ENCODE measurements at regions of chr20 and their contacts with region 1.

Region 1: DNA sequence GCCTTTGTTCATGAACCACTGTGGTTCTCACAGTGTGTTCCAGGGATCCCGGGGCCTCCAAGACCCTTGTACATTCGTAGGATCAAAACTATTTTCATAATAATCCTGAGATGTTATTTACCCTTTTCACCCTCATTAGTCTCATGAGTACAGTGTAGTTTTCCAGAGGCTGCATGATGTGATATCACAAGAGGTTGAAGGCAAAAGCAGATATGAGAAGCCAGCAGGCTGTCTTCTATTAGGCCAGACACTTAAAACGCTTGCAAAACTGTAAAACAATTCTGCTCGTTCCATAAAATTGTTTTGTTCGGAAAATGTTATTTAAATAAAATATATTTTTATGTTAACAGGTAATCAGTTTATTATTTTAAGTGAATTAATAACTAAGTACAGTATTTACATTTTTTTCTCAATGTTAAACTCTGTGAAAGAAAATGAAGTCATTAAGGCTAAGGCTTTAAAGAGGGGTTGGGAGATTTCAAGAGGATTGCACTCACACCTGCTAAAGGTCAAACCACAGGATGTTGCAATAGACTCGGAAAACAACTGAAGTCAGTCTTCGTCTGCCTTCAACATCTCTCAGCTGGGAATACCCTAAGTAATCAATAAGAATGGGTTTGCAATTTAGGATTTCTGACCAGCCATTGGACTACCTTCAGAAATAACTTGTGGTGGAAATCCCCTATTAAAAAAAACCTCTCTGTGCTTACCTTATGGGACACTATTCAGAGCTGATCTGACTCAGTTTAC is 474.2 kb downstream of the KIF16B start:
- DNase-seq: no peak
- ATAC-seq: no peak
- H3K4me3 ChIP-seq: no peak overlapping the region
- H3K27ac ChIP-seq: no peak overlapping the region
- H3K4me1 ChIP-seq: peaks cover 3% of the 10 kb centered on the region
- H3K27me3 ChIP-seq: no peaks in the 10 kb centered on the region

Region 2: DNA sequence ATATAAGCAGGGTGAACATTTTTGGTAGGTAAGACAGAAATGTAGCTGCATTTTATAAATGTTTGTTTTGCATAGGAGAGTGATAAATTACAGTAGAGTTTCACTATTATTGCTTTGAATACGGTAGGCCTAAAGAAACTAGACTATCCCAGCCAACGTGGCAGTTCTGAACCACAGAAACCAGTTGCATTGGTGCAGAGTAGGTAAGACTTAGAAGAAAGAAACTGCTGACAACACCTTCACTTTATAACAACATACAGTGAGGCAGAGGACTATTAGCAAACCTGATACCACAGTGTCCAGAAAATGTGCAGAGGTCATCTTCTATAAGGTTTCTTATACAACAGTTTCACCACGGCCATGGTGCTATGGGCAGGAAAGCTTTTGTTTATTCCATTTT is 91.9 kb before region 1 on chr20:
- intact Hi-C with region 1: loop called in 1 of 4 experiments (anchors 10 kb)
- DNase-seq: no peak
- ATAC-seq: no peak
- H3K4me3 ChIP-seq: no peak overlapping the region
- H3K27ac ChIP-seq: no peak overlapping the region
- H3K4me1 ChIP-seq: no peaks in the 10 kb centered on the region
- H3K27me3 ChIP-seq: no peaks in the 10 kb centered on the region

Measured in right cardiac atrium (tissue), 5 donors.